ENCODE measurements at regions of chrX and their contacts with region 1.

Region 1: GRCh38 chrX:67724359-67725110 is 180.7 kb downstream of the AR start:
- DNase-seq: peak in 1 of 10 donors; percentile 11

Region 2: GRCh38 chrX:67780694-67781109 is 56.2 kb after region 1 on chrX:
- intact Hi-C with region 1: loop called (anchors 5 kb)
- DNase-seq: peak in 8 of 10 donors; percentile 9 to 91 (median 32)

Measured in posterior cingulate gyrus (tissue), 11 donors.